ENCODE measurements at regions of chr11 and their contacts with region 1.

Region 1: GRCh38 chr11:10857709-10858438 is at the start of gene ZBED5:
- DNase-seq: peak; percentile 97
- ATAC-seq: peak; percentile 90
- H3K4me3 Mint-ChIP-seq: peak within 1 kb of the TSS; percentile 100
- H3K27ac Mint-ChIP-seq: peak within 1 kb of the TSS; percentile 100
- H3K4me1 Mint-ChIP-seq: peaks cover 22% of the 10 kb centered on the region
- H3K27me3 Mint-ChIP-seq: no peaks in the 10 kb centered on the region
- total RNA-seq, gene ZBED5: 69.7 to 72.0 TPM

Region 2: GRCh38 chr11:10792398-10792975 is 65.4 kb before region 1 on chr11:
- POLR2A ChIA-PET with region 1: interaction called, 10 read pairs
- DNase-seq: peak; percentile 92
- ATAC-seq: peak; percentile 92
- H3K4me3 Mint-ChIP-seq: peak overlapping the region; percentile 68
- H3K27ac Mint-ChIP-seq: peak overlapping the region; percentile 46
- H3K4me1 Mint-ChIP-seq: peaks cover 21% of the 10 kb centered on the region
- H3K27me3 Mint-ChIP-seq: peaks cover 12% of the 10 kb centered on the region

Region 3: GRCh38 chr11:10803676-10804075 is 54.2 kb before region 1 on chr11:
- POLR2A ChIA-PET with region 1: interaction called, 235 read pairs
- DNase-seq: no peak
- ATAC-seq: no peak
- H3K4me3 Mint-ChIP-seq: no peak overlapping the region
- H3K27ac Mint-ChIP-seq: no peak overlapping the region
- H3K4me1 Mint-ChIP-seq: peaks cover 58% of the 10 kb centered on the region
- H3K27me3 Mint-ChIP-seq: no peaks in the 10 kb centered on the region

Region 4: GRCh38 chr11:10933455-10934292 is 75.8 kb after region 1 on chr11:
- POLR2A ChIA-PET with region 1: interaction called, 13 read pairs
- DNase-seq: peak; percentile 82
- ATAC-seq: peak; percentile 81
- H3K4me3 Mint-ChIP-seq: peak overlapping the region; percentile 85
- H3K27ac Mint-ChIP-seq: no peak overlapping the region
- H3K4me1 Mint-ChIP-seq: peaks cover 15% of the 10 kb centered on the region
- H3K27me3 Mint-ChIP-seq: peaks cover 42% of the 10 kb centered on the region

Region 5: DNA sequence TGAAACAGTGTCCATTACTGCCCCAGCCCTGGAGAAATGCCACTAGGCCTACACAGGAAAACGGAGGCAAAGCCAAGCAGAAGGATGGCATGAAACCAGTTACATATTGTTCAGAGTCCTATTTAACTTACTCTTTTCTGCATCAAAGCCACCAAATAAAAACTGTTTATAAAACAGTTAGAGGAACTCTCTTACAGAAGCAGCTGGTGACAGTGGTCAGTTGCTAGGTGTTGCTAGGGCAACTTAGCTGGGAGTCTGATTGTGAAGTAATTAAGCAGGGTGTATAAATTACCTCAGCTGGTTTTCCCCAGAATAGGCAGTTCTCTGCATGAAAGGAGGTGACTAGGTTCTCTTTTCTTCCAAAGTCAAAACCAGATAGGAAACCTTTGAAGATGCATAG is 115.5 kb after region 1 on chr11:
- POLR2A ChIA-PET with region 1: no interaction called
- DNase-seq: no peak
- ATAC-seq: no peak
- H3K4me3 Mint-ChIP-seq: no peak overlapping the region
- H3K27ac Mint-ChIP-seq: no peak overlapping the region
- H3K4me1 Mint-ChIP-seq: no peaks in the 10 kb centered on the region
- H3K27me3 Mint-ChIP-seq: peaks cover 13% of the 10 kb centered on the region

Measured in activated naive CD8-positive, alpha-beta T cell treated with anti-CD3 and anti-CD28 coated beads, Interleukin-2, amount 10 ng/mL, durations not matched to agents 7 days and 5 days (primary cell).